Caco-2 (cell line): ENCODE measurements at regions of chr4 and their contacts with region 1.

Region 1: DNA sequence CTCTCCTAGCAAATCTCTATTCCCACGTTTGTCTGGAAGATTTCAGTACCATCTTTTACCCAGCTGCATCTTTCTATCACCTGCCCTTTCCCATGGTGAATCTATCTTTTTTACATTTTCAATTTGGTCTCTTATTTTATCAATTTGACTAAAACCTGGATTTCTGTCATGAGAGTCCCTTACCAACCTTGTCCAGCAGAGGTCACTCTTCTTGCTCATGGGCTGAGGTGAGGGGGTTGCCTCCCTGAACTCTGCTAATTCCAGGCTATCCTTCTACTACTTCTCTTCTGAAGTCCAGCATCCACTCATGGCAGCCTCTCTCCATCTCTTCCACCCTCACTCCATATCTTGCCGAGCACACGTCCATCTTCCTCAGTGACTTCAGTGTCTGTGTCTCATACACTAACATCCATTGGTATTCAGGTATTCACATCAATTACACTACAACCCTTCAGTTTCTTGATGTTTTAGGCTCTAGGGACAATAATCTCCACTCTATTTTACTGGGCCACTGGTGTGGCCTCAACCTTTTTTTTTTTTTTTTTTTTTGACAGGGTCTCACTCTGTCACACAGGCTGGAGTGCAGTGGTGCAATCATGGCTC is 17.8 kb upstream of the ZNF827 start:
- DNase-seq: peak in 1 of 2 experiments; percentile 52
- H3K4me3 ChIP-seq: no peak overlapping the region
- H3K4me3 Mint-ChIP-seq: no peak overlapping the region
- H3K27ac Mint-ChIP-seq: no peak overlapping the region
- H3K4me1 ChIP-seq: no peaks in the 10 kb centered on the region
- H3K4me1 Mint-ChIP-seq: no peaks in the 10 kb centered on the region
- H3K27me3 ChIP-seq: no peaks in the 10 kb centered on the region
- H3K27me3 Mint-ChIP-seq: peaks cover 12% of the 10 kb centered on the region
- CTCF ChIP-seq: peak; percentile 50 to 69

Region 2: DNA sequence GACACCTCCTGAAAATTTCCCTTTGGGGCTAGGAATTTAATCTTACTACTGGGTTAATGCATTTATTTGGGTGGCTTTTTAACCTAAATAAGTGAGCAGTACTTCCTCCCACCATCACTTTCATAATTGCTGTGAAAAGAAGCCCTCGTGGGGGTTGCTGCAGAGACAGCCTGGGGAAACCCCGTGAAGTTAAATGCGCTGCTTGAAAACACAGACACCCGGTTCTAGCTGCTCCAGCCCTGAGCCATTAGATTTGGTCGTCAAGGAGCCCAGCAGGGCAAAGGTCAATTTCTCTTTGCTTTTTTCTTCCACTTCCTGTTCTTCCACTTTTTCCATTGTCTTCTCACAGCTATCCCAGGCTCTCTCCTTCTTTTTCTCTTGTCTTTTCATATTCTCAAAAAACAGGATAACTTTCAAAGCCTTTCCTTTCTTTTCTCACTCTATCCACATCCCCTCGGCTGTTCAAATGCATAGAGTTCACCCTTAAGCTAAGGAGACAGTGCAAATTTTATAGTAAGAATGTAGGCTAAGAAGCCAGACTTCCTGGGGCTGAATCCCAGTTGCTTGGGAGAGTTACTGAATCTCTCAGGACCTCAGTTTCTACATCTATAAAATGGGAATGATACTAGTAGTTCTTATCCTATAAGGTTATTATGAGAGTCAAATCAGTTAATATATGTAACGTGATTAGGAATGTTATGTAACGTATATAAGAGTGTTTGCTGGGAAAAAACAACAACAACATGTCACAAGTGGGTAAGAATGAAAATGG is 73.7 kb after region 1 on chr4:
- CTCF ChIA-PET with region 1: no interaction called
- POLR2A ChIA-PET with region 1: no interaction called
- intact Hi-C with region 1: loop called (anchors 5 kb)
- DNase-seq: peak; percentile 43 to 48
- H3K4me3 ChIP-seq: no peak overlapping the region
- H3K4me3 Mint-ChIP-seq: peak overlapping the region; percentile 22
- H3K27ac Mint-ChIP-seq: peak overlapping the region; percentile 24
- H3K4me1 ChIP-seq: peaks cover 18% of the 10 kb centered on the region
- H3K4me1 Mint-ChIP-seq: peaks cover 13% of the 10 kb centered on the region
- H3K27me3 ChIP-seq: no peaks in the 10 kb centered on the region
- H3K27me3 Mint-ChIP-seq: no peaks in the 10 kb centered on the region
- CTCF ChIP-seq: no peak

Region 3: GRCh38 chr4:146165840-146166239 is 209.5 kb after region 1 on chr4:
- CTCF ChIA-PET with region 1: no interaction called
- POLR2A ChIA-PET with region 1: no interaction called
- intact Hi-C with region 1: no loop called
- DNase-seq: no peak
- H3K4me3 ChIP-seq: no peak overlapping the region
- H3K4me3 Mint-ChIP-seq: no peak overlapping the region
- H3K27ac Mint-ChIP-seq: no peak overlapping the region
- H3K4me1 ChIP-seq: no peaks in the 10 kb centered on the region
- H3K4me1 Mint-ChIP-seq: no peaks in the 10 kb centered on the region
- H3K27me3 ChIP-seq: no peaks in the 10 kb centered on the region
- H3K27me3 Mint-ChIP-seq: no peaks in the 10 kb centered on the region
- CTCF ChIP-seq: no peak